Tibial artery (tissue), 4 donors: ENCODE measurements at regions of chr2 and their contacts with region 1.

Region 1: DNA sequence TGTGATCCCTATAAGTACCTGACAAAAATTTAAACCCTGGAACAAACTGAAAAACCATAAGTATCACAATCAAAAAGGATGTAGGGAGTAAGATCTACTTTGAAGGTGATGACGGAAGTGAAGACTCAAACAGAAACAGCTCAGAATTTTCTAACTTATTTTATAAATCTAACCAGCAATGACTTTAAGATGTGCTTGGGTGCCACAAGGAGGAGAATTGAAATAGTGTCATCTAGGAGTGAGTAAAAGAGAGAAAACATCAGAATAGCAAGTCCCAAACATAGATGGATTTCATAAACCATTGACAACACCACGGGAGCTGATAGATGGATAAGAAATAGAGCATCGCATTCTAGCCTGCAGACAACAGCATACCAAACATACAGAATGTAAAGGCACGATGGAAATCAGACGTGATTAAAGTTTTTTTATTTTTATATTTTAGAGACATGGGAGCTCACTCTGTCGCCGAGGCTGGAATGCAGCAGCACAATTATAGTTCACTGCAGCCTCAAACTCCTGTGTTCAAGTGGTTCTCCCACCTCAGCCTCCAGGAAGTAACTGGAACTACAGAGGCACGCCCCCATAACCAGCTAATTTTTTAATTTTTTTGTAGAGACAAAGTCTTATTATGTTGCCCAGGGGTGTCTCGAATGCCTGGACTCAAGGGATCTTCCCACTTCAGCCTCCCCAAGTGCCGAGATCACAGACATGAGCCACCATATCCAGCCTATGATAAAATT is 36.9 kb downstream of the MAP3K19 start:
- DNase-seq: no peak
- H3K4me3 ChIP-seq: no peak overlapping the region
- H3K27ac ChIP-seq: no peak overlapping the region
- H3K4me1 ChIP-seq: no peaks in the 10 kb centered on the region
- H3K27me3 ChIP-seq: peaks cover 0 to 5% of the 10 kb centered on the region in 2 donors
- CTCF ChIP-seq: no peak

Region 2: GRCh38 chr2:134173338-134174016 is 836.9 kb before region 1 on chr2:
- intact Hi-C with region 1: no loop called
- DNase-seq: no peak
- H3K4me3 ChIP-seq: no peak overlapping the region
- H3K27ac ChIP-seq: no peak overlapping the region
- H3K4me1 ChIP-seq: peaks cover 0 to 60% (median 17%) of the 10 kb centered on the region in 4 donors
- H3K27me3 ChIP-seq: no peaks in the 10 kb centered on the region
- CTCF ChIP-seq: no peak

Region 3: DNA sequence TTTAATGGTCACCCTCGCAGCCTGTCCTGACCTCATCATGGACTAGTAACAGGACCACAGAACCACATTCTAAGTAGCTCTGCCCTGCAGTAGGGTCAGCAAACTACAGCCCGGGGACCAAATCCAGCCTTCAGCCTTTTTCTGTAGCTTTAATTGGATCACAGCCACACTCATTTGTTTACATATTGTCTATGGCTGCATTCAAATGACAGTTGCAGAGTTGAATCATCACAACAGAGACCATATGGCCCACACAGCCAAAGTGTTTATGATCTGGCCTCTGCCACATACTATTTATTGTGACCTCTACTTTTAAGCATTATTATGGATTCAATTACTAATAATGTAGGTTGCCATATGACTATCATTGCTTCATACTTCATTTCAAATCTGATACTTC is 10.8 kb before region 1 on chr2:
- intact Hi-C with region 1: no loop called
- DNase-seq: no peak
- H3K4me3 ChIP-seq: no peak overlapping the region
- H3K27ac ChIP-seq: no peak overlapping the region
- H3K4me1 ChIP-seq: peaks cover 0 to 2% (median 0%) of the 10 kb centered on the region in 4 donors
- H3K27me3 ChIP-seq: peaks cover 0 to 2% of the 10 kb centered on the region in 2 donors
- CTCF ChIP-seq: no peak

Region 4: GRCh38 chr2:135378591-135378990 is 368.2 kb after region 1 on chr2:
- intact Hi-C with region 1: no loop called
- DNase-seq: no peak
- H3K4me3 ChIP-seq: no peak overlapping the region
- H3K27ac ChIP-seq: no peak overlapping the region
- H3K4me1 ChIP-seq: no peaks in the 10 kb centered on the region
- H3K27me3 ChIP-seq: no peaks in the 10 kb centered on the region
- CTCF ChIP-seq: no peak

Region 5: DNA sequence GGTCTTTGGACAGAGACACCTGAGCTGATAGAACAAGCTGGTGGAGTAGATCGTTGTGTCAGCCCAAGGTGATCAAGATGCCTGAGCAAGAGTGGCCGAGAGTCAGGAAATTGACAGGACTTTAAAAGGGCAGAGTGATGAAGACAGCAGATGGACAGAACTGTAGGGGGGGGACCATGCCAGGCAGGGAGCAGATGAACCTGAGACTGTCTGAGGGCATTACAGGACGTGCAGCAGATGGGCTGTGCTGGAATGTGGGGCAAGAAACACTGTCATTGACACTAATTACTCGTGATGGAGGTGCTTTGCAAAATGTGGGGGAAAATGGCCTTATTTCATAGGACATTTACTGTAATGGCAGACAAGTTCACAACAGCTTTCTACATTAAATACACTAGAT is 1979.9 kb after region 1 on chr2:
- intact Hi-C with region 1: loop called (anchors 5 kb)
- DNase-seq: no peak
- H3K4me3 ChIP-seq: no peak overlapping the region
- H3K27ac ChIP-seq: no peak overlapping the region
- H3K4me1 ChIP-seq: no peaks in the 10 kb centered on the region
- H3K27me3 ChIP-seq: no peaks in the 10 kb centered on the region
- CTCF ChIP-seq: no peak